GM13976 (cell line): ENCODE measurements at regions of chr10 and their contacts with region 1.

Region 1: GRCh38 chr10:93916257-93917063 is 22.7 kb downstream of the SLC35G1 start:
- DNase-seq: no peak
- CTCF ChIP-seq: no peak

Region 2: DNA sequence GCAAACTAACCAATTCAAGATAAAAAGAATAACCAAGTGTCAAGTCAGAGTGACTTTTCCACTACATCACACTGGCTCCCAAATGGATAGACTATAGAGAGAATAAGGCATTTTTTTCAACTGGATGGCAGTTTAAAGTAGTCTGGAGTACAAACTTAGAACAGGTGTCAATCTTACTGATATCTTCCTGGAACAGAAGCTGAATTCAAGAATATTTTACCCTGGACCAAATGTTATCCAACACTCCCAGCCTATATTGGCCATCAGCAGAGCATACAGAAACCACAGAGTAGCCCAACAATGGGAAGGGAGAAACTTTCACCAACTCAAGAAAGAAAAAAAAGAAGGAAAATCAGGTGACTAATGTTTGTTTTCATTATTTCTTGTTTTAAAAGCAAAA is 1354.0 kb before region 1 on chr10:
- in situ Hi-C with region 1: no loop called
- DNase-seq: no peak
- CTCF ChIP-seq: no peak

Region 3: GRCh38 chr10:94320285-94320914 is 403.9 kb after region 1 on chr10:
- in situ Hi-C with region 1: loop called (anchors 25 kb)
- DNase-seq: peak; percentile 51
- CTCF ChIP-seq: peak; percentile 63

Region 4: GRCh38 chr10:94439275-94439861 is 522.9 kb after region 1 on chr10:
- in situ Hi-C with region 1: loop called (anchors 25 kb)
- DNase-seq: no peak
- CTCF ChIP-seq: no peak